Caco-2 (cell line): ENCODE measurements at regions of chr6 and their contacts with region 1.

Region 1: DNA sequence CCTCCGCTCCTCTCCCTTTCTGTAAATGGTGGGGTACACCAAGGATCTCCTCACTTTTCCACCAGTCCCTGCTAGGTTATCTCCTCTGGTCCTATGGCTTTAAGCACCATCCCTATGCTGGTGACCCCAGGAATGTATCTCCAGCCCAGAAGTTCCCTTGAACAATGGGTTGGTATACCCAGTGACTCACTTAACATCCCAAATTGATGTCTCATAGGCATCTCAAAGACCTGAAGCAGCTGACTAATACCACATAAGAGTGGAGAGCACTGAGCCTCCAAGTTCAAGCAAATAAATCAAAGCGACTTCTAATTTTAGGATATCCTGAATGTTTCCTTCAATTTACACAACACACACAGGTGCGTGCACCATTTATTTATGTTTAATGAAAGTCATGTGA is 48.3 kb downstream of the ADGRF1 start:
- DNase-seq: no peak
- H3K4me3 ChIP-seq: no peak overlapping the region
- H3K4me3 Mint-ChIP-seq: no peak overlapping the region
- H3K27ac Mint-ChIP-seq: no peak overlapping the region
- H3K4me1 ChIP-seq: peaks cover 32% of the 10 kb centered on the region
- H3K4me1 Mint-ChIP-seq: peaks cover 25% of the 10 kb centered on the region
- H3K27me3 ChIP-seq: no peaks in the 10 kb centered on the region
- H3K27me3 Mint-ChIP-seq: no peaks in the 10 kb centered on the region
- CTCF ChIP-seq: no peak

Region 2: GRCh38 chr6:46573140-46573539 is 420.7 kb before region 1 on chr6:
- CTCF ChIA-PET with region 1: no interaction called
- POLR2A ChIA-PET with region 1: no interaction called
- intact Hi-C with region 1: no loop called
- DNase-seq: no peak
- H3K4me3 ChIP-seq: no peak overlapping the region
- H3K4me3 Mint-ChIP-seq: no peak overlapping the region
- H3K27ac Mint-ChIP-seq: no peak overlapping the region
- H3K4me1 ChIP-seq: no peaks in the 10 kb centered on the region
- H3K4me1 Mint-ChIP-seq: no peaks in the 10 kb centered on the region
- H3K27me3 ChIP-seq: no peaks in the 10 kb centered on the region
- H3K27me3 Mint-ChIP-seq: no peaks in the 10 kb centered on the region
- CTCF ChIP-seq: no peak

Region 3: DNA sequence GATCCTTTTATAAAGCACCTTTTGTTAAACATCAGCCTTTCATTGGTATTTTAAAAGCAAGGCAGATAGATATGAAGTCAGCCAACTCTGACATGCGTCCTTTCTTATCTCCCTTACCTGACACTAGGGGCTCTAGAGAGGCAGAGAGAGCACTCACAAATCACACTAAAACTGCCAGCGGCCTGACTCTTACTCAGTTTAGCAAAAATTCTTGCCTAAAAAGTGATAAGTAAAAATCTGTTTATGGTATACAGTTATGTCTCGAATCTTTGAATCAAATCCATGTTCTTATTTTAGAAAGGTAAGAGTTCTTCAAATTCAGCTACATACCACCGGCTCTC is 316.6 kb before region 1 on chr6:
- CTCF ChIA-PET with region 1: no interaction called
- POLR2A ChIA-PET with region 1: no interaction called
- intact Hi-C with region 1: loop called (anchors 1 kb)
- DNase-seq: peak in 1 of 2 experiments; percentile 4
- H3K4me3 ChIP-seq: no peak overlapping the region
- H3K4me3 Mint-ChIP-seq: no peak overlapping the region
- H3K27ac Mint-ChIP-seq: no peak overlapping the region
- H3K4me1 ChIP-seq: no peaks in the 10 kb centered on the region
- H3K4me1 Mint-ChIP-seq: no peaks in the 10 kb centered on the region
- H3K27me3 ChIP-seq: no peaks in the 10 kb centered on the region
- H3K27me3 Mint-ChIP-seq: peaks cover 3% of the 10 kb centered on the region
- CTCF ChIP-seq: peak; percentile 70 to 76

Region 4: DNA sequence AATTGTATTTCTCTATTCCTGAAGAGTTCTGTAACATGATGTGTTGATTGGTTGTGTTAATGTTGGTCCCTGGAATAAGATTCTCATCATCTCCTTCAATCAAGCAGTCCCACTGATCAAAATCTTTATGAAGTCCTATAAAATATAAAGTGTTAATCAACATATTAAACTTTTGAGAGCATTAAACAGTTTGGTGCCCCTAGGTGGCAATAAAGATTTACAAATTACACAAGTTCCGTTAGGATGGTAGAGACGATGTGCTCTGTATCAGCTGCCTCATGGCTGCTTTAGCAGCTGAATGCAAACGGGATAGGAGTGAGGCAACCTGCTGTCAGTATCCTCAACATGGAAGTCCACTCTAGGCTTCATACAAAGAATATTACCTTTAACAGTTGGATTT is 289.3 kb before region 1 on chr6:
- CTCF ChIA-PET with region 1: no interaction called
- POLR2A ChIA-PET with region 1: no interaction called
- intact Hi-C with region 1: loop called (anchors 10 kb)
- DNase-seq: no peak
- H3K4me3 ChIP-seq: no peak overlapping the region
- H3K4me3 Mint-ChIP-seq: no peak overlapping the region
- H3K27ac Mint-ChIP-seq: no peak overlapping the region
- H3K4me1 ChIP-seq: no peaks in the 10 kb centered on the region
- H3K4me1 Mint-ChIP-seq: no peaks in the 10 kb centered on the region
- H3K27me3 ChIP-seq: no peaks in the 10 kb centered on the region
- H3K27me3 Mint-ChIP-seq: peaks cover 10% of the 10 kb centered on the region
- CTCF ChIP-seq: no peak

Region 5: DNA sequence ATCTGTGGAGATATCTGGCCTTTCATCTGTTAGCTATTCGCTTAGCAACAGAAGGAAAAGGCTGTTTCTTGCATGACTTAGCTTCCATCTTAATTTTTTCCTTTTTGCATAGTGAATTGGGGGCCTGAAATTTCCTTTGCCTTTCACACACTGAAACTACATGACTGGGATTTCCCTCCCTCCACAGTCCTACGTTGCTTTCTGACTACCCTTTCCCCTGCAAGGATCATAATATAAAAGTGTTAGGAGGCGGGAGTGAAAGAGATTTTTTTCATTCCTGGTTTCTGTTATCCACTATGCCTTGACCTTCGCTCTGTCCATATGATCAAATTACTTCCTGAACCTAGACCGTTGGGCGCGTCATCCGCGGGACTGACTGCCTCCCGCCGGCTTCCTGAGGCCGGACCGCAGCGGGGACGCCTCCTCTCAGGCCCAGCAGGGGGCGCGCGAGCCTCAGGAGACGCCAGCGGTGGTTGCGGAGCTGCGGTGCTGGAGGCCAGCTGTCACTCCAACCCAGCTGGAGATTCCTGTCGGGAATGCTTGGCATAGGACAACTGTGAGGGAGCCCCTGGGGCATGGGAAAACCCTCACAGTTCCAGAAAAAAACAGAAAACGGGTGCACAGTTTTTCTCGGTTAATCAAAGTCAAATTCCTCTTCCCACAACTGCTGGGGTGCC is 145.0 kb before region 1 on chr6:
- CTCF ChIA-PET with region 1: interaction called, 5 read pairs
- POLR2A ChIA-PET with region 1: no interaction called
- intact Hi-C with region 1: loop called (anchors 1 kb)
- DNase-seq: peak; percentile 74 to 90
- H3K4me3 ChIP-seq: no peak overlapping the region
- H3K4me3 Mint-ChIP-seq: peak overlapping the region; percentile 55
- H3K27ac Mint-ChIP-seq: peak overlapping the region; percentile 2
- H3K4me1 ChIP-seq: no peaks in the 10 kb centered on the region
- H3K4me1 Mint-ChIP-seq: peaks cover 12% of the 10 kb centered on the region
- H3K27me3 ChIP-seq: no peaks in the 10 kb centered on the region
- H3K27me3 Mint-ChIP-seq: no peaks in the 10 kb centered on the region
- CTCF ChIP-seq: peak; percentile 94 to 95

Region 6: GRCh38 chr6:47047479-47048407 is 53.9 kb after region 1 on chr6:
- CTCF ChIA-PET with region 1: no interaction called
- POLR2A ChIA-PET with region 1: no interaction called
- intact Hi-C with region 1: loop called (anchors 2 kb)
- DNase-seq: peak; percentile 62 to 74
- H3K4me3 ChIP-seq: no peak overlapping the region
- H3K4me3 Mint-ChIP-seq: peak overlapping the region; percentile 37
- H3K27ac Mint-ChIP-seq: peak overlapping the region; percentile 46
- H3K4me1 ChIP-seq: peaks cover 12% of the 10 kb centered on the region
- H3K4me1 Mint-ChIP-seq: peaks cover 6% of the 10 kb centered on the region
- H3K27me3 ChIP-seq: no peaks in the 10 kb centered on the region
- H3K27me3 Mint-ChIP-seq: no peaks in the 10 kb centered on the region
- CTCF ChIP-seq: peak; percentile 78 to 79